Activated naive CD4-positive, alpha-beta T cell treated with anti-CD3 and anti-CD28 coated beads for 36 hours (primary cell): ENCODE measurements at regions of chr19 and their contacts with region 1.

Region 1: GRCh38 chr19:18521885-18522624 is at the start of gene ELL:
- DNase-seq: peak; percentile 100
- H3K4me3 Mint-ChIP-seq: peak within 1 kb of the TSS; percentile 85
- H3K27ac Mint-ChIP-seq: peak within 1 kb of the TSS; percentile 89
- H3K4me1 Mint-ChIP-seq: peaks cover 17% of the 10 kb centered on the region
- H3K27me3 Mint-ChIP-seq: no peaks in the 10 kb centered on the region
- total RNA-seq, gene ELL: 14.1 TPM

Region 2: DNA sequence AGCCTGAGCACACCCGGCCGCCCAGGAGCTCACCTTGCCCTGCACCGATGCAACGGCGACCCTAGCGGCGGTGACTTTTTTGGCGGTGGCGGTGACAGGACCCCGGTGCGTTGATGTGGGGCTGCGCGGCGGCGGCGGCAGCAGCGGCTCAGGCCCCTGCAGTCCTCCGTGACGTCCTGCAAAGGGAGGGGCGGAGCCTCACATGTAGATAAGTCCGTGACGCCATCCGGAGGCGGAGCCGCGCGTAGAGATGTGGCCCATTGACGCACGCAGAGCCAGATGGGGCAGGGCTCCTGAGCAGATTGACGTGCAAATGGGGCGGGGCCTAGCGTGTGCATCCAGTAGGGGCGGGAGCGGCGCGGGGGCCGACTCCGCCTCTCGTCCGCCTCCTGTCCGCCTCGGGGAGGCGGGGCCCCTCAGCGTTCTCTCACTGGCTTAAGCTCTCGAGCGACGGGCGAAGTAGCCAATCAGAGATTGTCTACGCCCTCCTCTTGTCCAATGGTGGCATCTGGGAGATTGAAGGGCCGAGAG is 318.1 kb before region 1 on chr19 and contains the start of gene RAB3A:
- CTCF ChIA-PET with region 1: no interaction called
- intact Hi-C with region 1: loop called (anchors 1 kb)
- DNase-seq: peak; percentile 100
- H3K4me3 Mint-ChIP-seq: peak within 1 kb of the TSS; percentile 94
- H3K27ac Mint-ChIP-seq: peak within 1 kb of the TSS; percentile 68
- H3K4me1 Mint-ChIP-seq: peaks cover 22% of the 10 kb centered on the region
- H3K27me3 Mint-ChIP-seq: peaks cover 5% of the 10 kb centered on the region
- total RNA-seq, gene RAB3A: 3.8 to 6.0 TPM

Region 3: DNA sequence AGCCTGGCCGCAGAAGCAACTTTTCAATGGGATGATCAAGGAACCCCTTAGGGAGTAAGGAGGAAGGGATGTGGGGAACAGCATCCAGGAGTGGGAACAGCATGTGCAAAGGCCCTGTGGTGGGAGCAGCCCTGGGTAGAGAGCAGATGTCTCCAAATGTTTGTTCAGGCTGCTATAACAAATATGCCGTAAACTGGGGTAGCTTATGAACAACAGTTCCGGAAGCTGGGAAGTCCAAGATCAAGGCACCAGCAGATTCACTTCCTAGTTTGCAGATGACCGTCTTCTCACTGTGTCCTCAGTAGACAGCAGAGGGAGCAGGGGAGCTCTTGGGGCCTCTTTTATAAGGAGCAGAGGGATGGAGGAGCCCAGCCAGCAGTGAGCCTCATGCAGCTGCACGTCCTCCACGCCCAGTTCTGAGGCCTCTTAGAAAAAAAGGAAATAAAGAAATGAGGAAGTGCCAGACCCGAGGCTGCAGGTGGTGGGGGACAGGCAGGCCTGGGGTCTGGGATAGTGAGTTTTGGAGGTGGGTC is 120.4 kb before region 1 on chr19:
- CTCF ChIA-PET with region 1: no interaction called
- intact Hi-C with region 1: no loop called
- DNase-seq: no peak
- H3K4me3 Mint-ChIP-seq: no peak overlapping the region
- H3K27ac Mint-ChIP-seq: no peak overlapping the region
- H3K4me1 Mint-ChIP-seq: peaks cover 4% of the 10 kb centered on the region
- H3K27me3 Mint-ChIP-seq: peaks cover 7% of the 10 kb centered on the region

Region 4: GRCh38 chr19:18478569-18479311 is 43.3 kb before region 1 on chr19:
- CTCF ChIA-PET with region 1: interaction called, 9 read pairs
- intact Hi-C with region 1: loop called (anchors 1 kb)
- DNase-seq: peak; percentile 93
- H3K4me3 Mint-ChIP-seq: peak overlapping the region; percentile 38
- H3K27ac Mint-ChIP-seq: peak overlapping the region; percentile 87
- H3K4me1 Mint-ChIP-seq: peaks cover 65% of the 10 kb centered on the region
- H3K27me3 Mint-ChIP-seq: no peaks in the 10 kb centered on the region

Region 5: GRCh38 chr19:18557474-18558201 is 35.6 kb after region 1 on chr19 and contains the start of gene KXD1:
- CTCF ChIA-PET with region 1: interaction called, 26 read pairs
- intact Hi-C with region 1: loop called (anchors 1 kb)
- DNase-seq: peak; percentile 99
- H3K4me3 Mint-ChIP-seq: peak within 1 kb of the TSS; percentile 93
- H3K27ac Mint-ChIP-seq: peak within 1 kb of the TSS; percentile 92
- H3K4me1 Mint-ChIP-seq: peaks cover 24% of the 10 kb centered on the region
- H3K27me3 Mint-ChIP-seq: no peaks in the 10 kb centered on the region
- total RNA-seq, gene KXD1: 86.7 TPM

Region 6: GRCh38 chr19:18636183-18636968 is 114.3 kb after region 1 on chr19:
- CTCF ChIA-PET with region 1: no interaction called
- intact Hi-C with region 1: loop called (anchors 1 kb)
- DNase-seq: peak; percentile 100
- H3K4me3 Mint-ChIP-seq: peak overlapping the region; percentile 81
- H3K27ac Mint-ChIP-seq: peak overlapping the region; percentile 57
- H3K4me1 Mint-ChIP-seq: peaks cover 23% of the 10 kb centered on the region
- H3K27me3 Mint-ChIP-seq: no peaks in the 10 kb centered on the region

Region 7: GRCh38 chr19:19192078-19192882 is 670.2 kb after region 1 on chr19 and contains the starts of genes BORCS8 and RFXANK:
- CTCF ChIA-PET with region 1: no interaction called
- intact Hi-C with region 1: loop called (anchors 1 kb)
- DNase-seq: peak; percentile 100
- H3K4me3 Mint-ChIP-seq: peak within 1 kb of the TSS; percentile 93
- H3K27ac Mint-ChIP-seq: peak within 1 kb of the TSS; percentile 96
- H3K4me1 Mint-ChIP-seq: peaks cover 49% of the 10 kb centered on the region
- H3K27me3 Mint-ChIP-seq: no peaks in the 10 kb centered on the region
- total RNA-seq, gene BORCS8: 14.0 to 16.1 TPM
- total RNA-seq, gene RFXANK: 48.4 to 49.3 TPM

Region 8: DNA sequence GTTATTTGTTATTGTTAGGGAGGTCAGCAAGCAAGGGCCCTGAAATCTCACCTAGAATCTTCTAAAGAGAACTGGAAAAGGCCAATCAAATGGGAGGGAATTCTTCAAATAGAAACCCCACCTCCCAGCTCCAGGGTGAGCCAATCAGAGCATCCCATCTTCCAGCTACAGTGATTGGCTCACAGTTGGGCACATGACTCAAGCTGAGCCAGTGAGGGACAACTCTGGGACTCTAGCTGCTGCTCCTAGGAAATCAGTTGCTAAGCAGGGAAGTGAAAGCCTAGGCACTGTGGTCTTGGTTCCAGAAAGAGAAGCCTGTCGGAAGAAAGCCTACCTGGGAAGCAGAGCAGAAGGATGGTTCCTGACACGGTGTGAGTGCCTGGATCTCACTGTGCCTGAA is 737.7 kb after region 1 on chr19:
- CTCF ChIA-PET with region 1: no interaction called
- intact Hi-C with region 1: no loop called
- DNase-seq: no peak
- H3K4me3 Mint-ChIP-seq: no peak overlapping the region
- H3K27ac Mint-ChIP-seq: no peak overlapping the region
- H3K4me1 Mint-ChIP-seq: peaks cover 9% of the 10 kb centered on the region
- H3K27me3 Mint-ChIP-seq: peaks cover 56% of the 10 kb centered on the region